ENCODE measurements at regions of chr6 and their contacts with region 1.

Region 1: DNA sequence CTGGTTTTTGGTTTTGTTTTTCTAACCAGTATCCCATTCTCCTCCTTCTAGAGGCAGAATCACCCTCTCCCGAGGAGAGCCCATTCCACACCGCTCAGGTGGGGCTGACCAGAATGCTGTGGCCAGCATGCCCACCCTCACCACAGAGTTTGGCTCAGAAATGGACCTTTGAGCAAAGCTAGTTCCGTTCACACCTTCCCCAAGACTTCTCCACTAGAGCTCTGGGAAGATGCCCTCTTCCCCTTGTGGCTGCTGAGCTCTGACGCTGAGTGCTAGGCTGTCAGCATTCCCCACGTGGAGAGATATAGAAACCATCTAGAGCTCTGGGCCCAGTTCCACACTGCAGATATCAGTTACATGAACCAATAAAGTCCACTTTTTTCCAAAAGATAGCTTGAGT is 7.9 kb downstream of the GPLD1 start:
- DNase-seq: no peak
- H3K4me3 ChIP-seq: no peak overlapping the region
- H3K27ac ChIP-seq: no peak overlapping the region
- H3K4me1 ChIP-seq: no peaks in the 10 kb centered on the region
- H3K27me3 ChIP-seq: no peaks in the 10 kb centered on the region
- CTCF ChIP-seq: no peak

Region 2: GRCh38 chr6:23823421-23823820 is 658.0 kb before region 1 on chr6:
- CTCF ChIA-PET with region 1: no interaction called
- POLR2A ChIA-PET with region 1: interaction called, 15 read pairs
- intact Hi-C with region 1: no loop called
- DNase-seq: peak; percentile 84
- H3K4me3 ChIP-seq: no peak overlapping the region
- H3K27ac ChIP-seq: no peak overlapping the region
- H3K4me1 ChIP-seq: peaks cover 22% of the 10 kb centered on the region
- H3K27me3 ChIP-seq: no peaks in the 10 kb centered on the region
- CTCF ChIP-seq: no peak

Measured in A673 (cell line).